ENCODE measurements at regions of chr16 and their contacts with region 1.

Region 1: GRCh38 chr16:57576429-57576870 is 34.0 kb downstream of the ADGRG5 start:
- DNase-seq: peak; percentile 61 to 92
- H3K4me3 ChIP-seq: no peak overlapping the region
- H3K27ac ChIP-seq: no peak overlapping the region
- H3K4me1 ChIP-seq: no peaks in the 10 kb centered on the region; a peak in 1 of 7 replicates
- H3K27me3 ChIP-seq: peaks cover 0 to 4% (median 0%) of the 10 kb centered on the region in 4 experiments; a peak in 2 of 7 replicates
- CTCF ChIP-seq: peak; percentile 94 to 99 (median 97)
- EP300 ChIP-seq: no peak
- POLR2A ChIP-seq: no peak
- RAD21 ChIP-seq: peak; percentile 91 to 94

Region 2: DNA sequence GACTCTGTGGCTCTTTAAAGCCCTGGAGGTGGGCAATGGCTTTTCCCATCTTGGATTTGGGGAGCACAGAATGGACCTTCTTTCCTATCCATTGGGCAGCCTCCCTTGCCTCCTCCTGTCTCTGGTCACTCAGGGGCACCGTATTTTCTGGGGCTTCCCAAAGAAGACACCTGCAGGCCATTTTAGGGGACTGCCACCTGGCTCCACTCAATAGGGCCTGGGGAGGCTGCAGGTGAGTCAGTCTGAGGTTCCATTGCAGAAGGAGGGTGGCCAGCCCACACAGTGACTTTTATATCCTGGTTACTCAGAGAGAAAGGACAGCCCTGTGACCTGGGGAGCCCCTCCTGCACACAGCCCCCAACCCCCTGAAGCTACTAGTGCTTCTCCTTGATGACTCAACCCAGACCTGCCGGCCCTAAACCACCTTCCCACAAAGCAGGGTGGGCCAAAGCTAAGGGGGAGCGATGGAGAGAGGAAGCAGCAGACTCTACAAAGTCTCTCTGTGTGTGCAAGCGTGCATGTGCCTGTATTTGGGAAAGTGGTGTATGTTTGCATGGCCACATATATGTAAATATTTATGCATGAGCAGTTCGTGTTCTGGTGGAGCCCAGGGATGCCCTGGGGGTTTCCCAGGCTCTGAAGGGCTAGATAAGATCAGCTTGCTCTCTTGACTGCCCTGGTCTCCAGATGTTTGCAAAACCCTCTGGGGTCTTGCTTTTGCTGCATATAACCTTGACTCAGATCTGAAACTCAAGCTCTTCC is 199.2 kb before region 1 on chr16:
- CTCF ChIA-PET with region 1: no interaction called
- POLR2A ChIA-PET with region 1: no interaction called
- DNase-seq: no peak
- H3K4me3 ChIP-seq: no peak overlapping the region
- H3K27ac ChIP-seq: no peak overlapping the region
- H3K4me1 ChIP-seq: peaks cover 0 to 18% (median 15%) of the 10 kb centered on the region in 4 experiments; a peak in 6 of 7 replicates
- H3K27me3 ChIP-seq: no peaks in the 10 kb centered on the region
- CTCF ChIP-seq: peak in 2 of 3 experiments; percentile 28 to 35; a peak in 3 of 4 replicates
- EP300 ChIP-seq: no peak
- POLR2A ChIP-seq: no peak
- RAD21 ChIP-seq: peak in 1 of 2 experiments; percentile 33; a peak in 1 of 4 replicates

Region 3: DNA sequence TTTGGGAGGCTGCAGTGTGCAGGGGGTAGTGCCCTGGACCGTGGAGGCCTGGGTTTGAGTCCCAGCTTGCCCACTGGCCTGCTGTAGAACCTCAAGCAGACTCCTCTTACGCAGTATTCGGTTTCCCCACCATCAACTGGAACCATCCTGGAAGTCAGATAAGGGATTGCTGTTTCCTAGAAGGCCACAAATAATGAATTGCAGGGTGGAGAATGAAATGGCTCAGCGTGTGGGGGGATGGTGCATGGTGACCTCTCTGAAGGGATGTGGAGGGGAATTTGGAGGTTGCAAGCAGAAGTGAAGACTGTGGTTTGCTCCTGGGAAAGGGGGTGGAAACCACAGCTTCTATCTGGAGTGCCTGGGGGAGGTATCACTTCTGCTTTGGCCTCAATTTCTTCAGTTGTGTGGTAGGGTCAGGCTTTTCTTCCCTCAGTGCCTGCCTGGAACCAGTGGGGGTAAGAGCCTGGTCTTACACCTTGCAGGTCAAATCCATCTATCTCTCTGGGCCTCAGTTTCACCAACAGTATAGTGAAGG is 32.3 kb before region 1 on chr16:
- CTCF ChIA-PET with region 1: interaction called, 17 read pairs
- POLR2A ChIA-PET with region 1: interaction called, 4 read pairs
- DNase-seq: peak in 1 of 2 experiments; percentile 31
- H3K4me3 ChIP-seq: no peak overlapping the region
- H3K27ac ChIP-seq: no peak overlapping the region
- H3K4me1 ChIP-seq: peaks cover 0 to 2% (median under 1%) of the 10 kb centered on the region in 4 experiments; a peak in 2 of 7 replicates
- H3K27me3 ChIP-seq: peaks cover 0 to 5% (median 1%) of the 10 kb centered on the region in 4 experiments; a peak in 2 of 7 replicates
- CTCF ChIP-seq: no peak
- EP300 ChIP-seq: no peak
- POLR2A ChIP-seq: no peak
- RAD21 ChIP-seq: no peak

Region 4: GRCh38 chr16:57591086-57591869 is 14.8 kb after region 1 on chr16:
- CTCF ChIA-PET with region 1: interaction called, 45 read pairs
- POLR2A ChIA-PET with region 1: no interaction called
- DNase-seq: peak in 1 of 2 experiments; percentile 88
- H3K4me3 ChIP-seq: no peak overlapping the region
- H3K27ac ChIP-seq: no peak overlapping the region
- H3K4me1 ChIP-seq: no peaks in the 10 kb centered on the region; a peak in 1 of 7 replicates
- H3K27me3 ChIP-seq: peaks cover 0 to 4% (median under 1%) of the 10 kb centered on the region in 4 experiments; a peak in 2 of 7 replicates
- CTCF ChIP-seq: peak; percentile 84 to 99 (median 96)
- EP300 ChIP-seq: no peak
- POLR2A ChIP-seq: no peak
- RAD21 ChIP-seq: peak; percentile 88 to 93

Region 5: GRCh38 chr16:57609541-57610401 is 33.3 kb after region 1 on chr16:
- CTCF ChIA-PET with region 1: interaction called, 36 read pairs
- POLR2A ChIA-PET with region 1: no interaction called
- DNase-seq: peak in 1 of 2 experiments; percentile 41
- H3K4me3 ChIP-seq: no peak overlapping the region
- H3K27ac ChIP-seq: no peak overlapping the region
- H3K4me1 ChIP-seq: no peaks in the 10 kb centered on the region
- H3K27me3 ChIP-seq: 0 out of 7 replicates have a peak, but pooled peaks cover 0 to 2% (median 0%) of the 10 kb centered on the region in 4 experiments
- CTCF ChIP-seq: peak; percentile 19 to 33 (median 29)
- EP300 ChIP-seq: no peak
- POLR2A ChIP-seq: no peak
- RAD21 ChIP-seq: peak; percentile 33 to 49; a peak in 3 of 4 replicates

Region 6: GRCh38 chr16:57639172-57639887 is 62.9 kb after region 1 on chr16:
- CTCF ChIA-PET with region 1: interaction called, 17 read pairs
- POLR2A ChIA-PET with region 1: no interaction called
- DNase-seq: peak in 1 of 2 experiments; percentile 84
- H3K4me3 ChIP-seq: peak overlapping the region in 1 of 4 experiments; percentile 18; a peak in 2 of 8 replicates
- H3K27ac ChIP-seq: no peak overlapping the region
- H3K4me1 ChIP-seq: peaks cover 0 to 3% (median 1%) of the 10 kb centered on the region in 4 experiments; a peak in 4 of 7 replicates
- H3K27me3 ChIP-seq: peaks cover 0 to 6% (median 4%) of the 10 kb centered on the region in 4 experiments; a peak in 5 of 7 replicates
- CTCF ChIP-seq: no peak
- EP300 ChIP-seq: no peak
- POLR2A ChIP-seq: no peak
- RAD21 ChIP-seq: no peak

Region 7: GRCh38 chr16:57653936-57654335 is 77.5 kb after region 1 on chr16:
- CTCF ChIA-PET with region 1: interaction called, 88 read pairs
- POLR2A ChIA-PET with region 1: no interaction called
- DNase-seq: no peak
- H3K4me3 ChIP-seq: no peak overlapping the region
- H3K27ac ChIP-seq: no peak overlapping the region
- H3K4me1 ChIP-seq: peaks cover 0 to 3% (median 0%) of the 10 kb centered on the region in 4 experiments; a peak in 4 of 7 replicates
- H3K27me3 ChIP-seq: no peaks in the 10 kb centered on the region
- CTCF ChIP-seq: no peak
- EP300 ChIP-seq: no peak
- POLR2A ChIP-seq: no peak
- RAD21 ChIP-seq: no peak

Region 8: DNA sequence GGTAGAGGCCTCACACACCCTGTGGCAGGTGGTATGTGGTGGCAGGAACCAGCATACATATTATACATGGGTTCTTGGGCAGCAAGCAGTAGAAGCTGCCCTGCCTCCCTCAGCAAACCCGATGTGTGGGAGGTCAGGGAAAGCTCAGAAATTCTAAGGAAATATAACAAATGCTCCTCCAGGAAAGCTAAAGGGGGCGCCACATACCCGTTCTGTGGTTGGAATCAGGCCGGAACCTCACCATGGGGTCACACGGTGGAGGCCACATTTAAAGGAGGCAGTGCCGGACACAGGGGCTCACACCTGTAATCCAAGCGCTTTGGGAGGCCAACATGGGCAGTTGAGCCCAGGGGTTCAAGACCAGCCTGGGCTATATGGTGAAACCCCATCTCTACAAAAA is 146.7 kb after region 1 on chr16:
- CTCF ChIA-PET with region 1: interaction called, 19 read pairs
- POLR2A ChIA-PET with region 1: no interaction called
- DNase-seq: peak in 1 of 2 experiments; percentile 77
- H3K4me3 ChIP-seq: no peak overlapping the region
- H3K27ac ChIP-seq: no peak overlapping the region
- H3K4me1 ChIP-seq: no peaks in the 10 kb centered on the region
- H3K27me3 ChIP-seq: no peaks in the 10 kb centered on the region; a peak in 1 of 7 replicates
- CTCF ChIP-seq: peak; percentile 58 to 81 (median 67)
- EP300 ChIP-seq: no peak
- POLR2A ChIP-seq: no peak
- RAD21 ChIP-seq: peak; percentile 73 to 85